GM13976 (cell line): ENCODE measurements at regions of chr7 and their contacts with region 1.

Region 1: GRCh38 chr7:12638851-12639467 is 48.5 kb upstream of the ARL4A start:
- DNase-seq: peak; percentile 16
- CTCF ChIP-seq: peak; percentile 44

Region 2: DNA sequence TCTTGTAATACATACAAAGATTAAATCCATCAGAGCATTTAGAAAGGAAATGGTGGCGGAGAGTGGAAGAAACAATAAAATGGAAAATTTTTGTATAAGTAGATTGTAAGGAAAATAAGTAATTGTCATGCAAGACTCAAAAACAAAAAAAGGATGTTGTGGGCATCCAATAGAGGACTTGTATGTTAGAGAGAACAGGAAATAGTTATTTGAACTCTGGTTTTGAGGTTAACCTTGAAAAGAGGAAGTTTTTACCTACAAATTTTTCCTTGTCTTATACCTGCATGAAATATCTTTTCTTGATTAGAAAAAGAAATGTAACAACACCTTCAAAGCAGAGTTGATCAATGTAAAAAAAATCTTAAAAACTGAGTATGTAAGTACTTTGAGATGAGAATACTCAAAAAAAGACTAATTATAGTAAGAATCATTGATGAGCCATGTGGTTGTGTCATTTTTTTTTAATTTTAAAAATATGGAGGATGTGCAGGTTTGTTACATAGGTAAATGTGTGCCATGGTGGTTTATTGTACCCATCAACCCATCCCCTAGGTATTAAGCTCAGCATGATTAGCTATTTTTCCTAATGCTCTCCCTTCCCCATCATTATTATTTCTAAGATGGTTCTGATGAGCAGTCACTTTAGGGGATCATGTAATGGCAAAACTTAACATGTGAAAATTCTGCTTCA is 415.9 kb before region 1 on chr7:
- in situ Hi-C with region 1: no loop called
- DNase-seq: no peak
- CTCF ChIP-seq: no peak

Region 3: DNA sequence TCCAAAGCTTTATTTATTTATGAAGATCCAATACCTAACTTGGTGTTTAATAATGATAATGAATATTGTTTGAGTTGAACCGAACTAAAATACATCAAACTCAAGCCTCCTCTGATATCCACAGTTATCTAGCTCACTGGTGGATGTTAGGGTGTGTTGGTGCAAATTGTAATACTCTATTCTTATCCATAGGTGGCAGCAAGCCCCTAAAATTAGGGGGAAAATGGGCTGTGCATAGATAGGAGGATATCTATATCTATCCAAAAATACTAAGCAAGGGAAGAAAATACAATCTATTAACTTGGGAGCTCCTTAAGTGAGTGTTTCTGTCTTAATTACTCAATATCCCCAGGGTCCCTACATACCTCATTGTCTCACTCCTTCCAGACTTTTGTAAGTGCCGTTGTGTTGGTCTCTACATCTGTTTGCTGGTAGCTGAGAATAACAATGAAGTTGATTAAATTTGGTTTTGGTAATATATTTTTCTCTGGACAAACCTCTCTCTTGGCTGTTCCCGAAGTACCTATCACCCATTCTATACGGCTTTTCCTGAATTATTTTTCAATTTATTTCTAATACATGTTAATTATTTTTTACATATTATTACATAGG is 180.3 kb before region 1 on chr7:
- in situ Hi-C with region 1: no loop called
- DNase-seq: peak; percentile 41
- CTCF ChIP-seq: peak; percentile 65

Region 4: DNA sequence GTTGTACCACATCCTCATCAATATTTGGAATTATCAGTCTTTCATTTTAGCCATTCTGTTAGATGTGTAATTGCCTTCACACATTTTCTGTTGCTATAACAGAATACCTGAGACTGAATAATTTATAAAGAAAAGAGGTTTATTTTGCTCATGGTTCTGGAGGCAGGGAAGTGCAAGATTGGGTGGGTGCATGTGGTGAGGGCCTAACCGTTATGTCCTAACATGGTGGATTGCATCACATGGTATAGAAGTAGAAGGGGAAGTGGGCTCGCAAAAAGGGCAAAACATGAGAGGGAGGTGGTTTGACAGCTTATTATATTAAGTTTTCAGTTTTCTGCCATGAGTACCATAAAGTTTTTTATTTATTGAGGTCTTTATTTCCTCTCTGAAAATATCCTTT is 500.5 kb after region 1 on chr7:
- in situ Hi-C with region 1: no loop called
- DNase-seq: no peak
- CTCF ChIP-seq: no peak

Region 5: GRCh38 chr7:13262929-13263530 is 624.1 kb after region 1 on chr7:
- in situ Hi-C with region 1: loop called (anchors 25 kb)
- DNase-seq: no peak
- CTCF ChIP-seq: no peak